Heart left ventricle (tissue), 16 donors: ENCODE measurements at regions of chr17 and their contacts with region 1.

Region 1: GRCh38 chr17:61389670-61390478 is 9.8 kb upstream of the TBX2 start:
- DNase-seq: peak in 3 of 5 donors; percentile 57 to 79 (median 63)
- ATAC-seq: peak in 3 of 4 donors; percentile 43 to 77 (median 67)
- H3K4me3 ChIP-seq: peak overlapping the region in 1 of 12 donors; percentile 26
- H3K27ac ChIP-seq: peak overlapping the region in 9 of 12 donors; percentile 20 to 66 (median 45)
- H3K4me1 ChIP-seq: peaks cover 0 to 13% (median 6%) of the 10 kb centered on the region in 12 donors
- H3K27me3 ChIP-seq: peaks cover 0 to 2% (median 0%) of the 10 kb centered on the region in 9 donors
- CTCF ChIP-seq: peak; percentile 73 to 95 (median 86)
- POLR2A ChIP-seq: no peak

Region 2: DNA sequence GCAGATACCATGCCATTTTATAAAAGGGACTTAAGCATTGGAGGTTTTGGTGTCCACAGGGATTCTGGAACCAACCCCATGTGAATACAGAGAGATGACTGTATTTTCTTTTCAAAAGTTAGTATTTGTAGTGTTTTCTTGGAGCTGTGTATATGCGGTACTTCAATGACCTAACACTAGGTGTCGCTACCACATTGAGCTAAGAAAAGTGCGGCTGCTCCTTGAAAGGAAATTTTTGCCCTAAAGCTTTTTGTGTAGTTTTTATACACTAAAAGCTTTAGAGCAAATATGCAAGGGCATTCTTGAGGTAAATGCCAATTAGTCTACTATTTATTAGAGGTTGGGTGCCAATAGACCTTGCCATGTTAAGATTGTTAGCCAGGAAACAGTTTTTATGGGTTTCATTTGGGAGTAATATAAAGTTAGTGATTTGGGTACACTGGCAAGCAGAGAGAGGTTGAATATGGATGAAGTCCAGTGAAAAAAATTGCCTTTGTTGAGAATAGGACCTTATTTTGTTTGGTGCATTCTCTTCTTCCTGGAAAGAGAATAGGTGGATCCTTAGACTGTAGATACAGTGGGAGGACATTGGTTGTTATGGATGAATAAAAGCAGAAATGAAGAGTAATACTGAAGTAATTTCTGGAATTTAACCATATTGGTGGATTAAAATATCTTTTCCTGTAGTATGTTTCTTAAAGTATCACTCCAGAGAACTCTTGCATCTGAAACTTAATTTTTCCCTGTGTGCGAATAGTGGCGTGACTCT is 668.9 kb before region 1 on chr17:
- intact Hi-C with region 1: loop called in 3 of 10 experiments (anchors 5 to 10 kb)
- DNase-seq: peak in 2 of 5 donors; percentile 18 to 27
- ATAC-seq: peak in 2 of 4 donors; percentile 41 to 62
- H3K4me3 ChIP-seq: no peak overlapping the region
- H3K27ac ChIP-seq: no peak overlapping the region
- H3K4me1 ChIP-seq: peaks cover 0 to 3% (median 0%) of the 10 kb centered on the region in 12 donors
- H3K27me3 ChIP-seq: no peaks in the 10 kb centered on the region
- CTCF ChIP-seq: peak; percentile 82 to 93 (median 88)
- POLR2A ChIP-seq: no peak

Region 3: GRCh38 chr17:60809421-60809820 is 580.5 kb before region 1 on chr17:
- intact Hi-C with region 1: no loop called
- DNase-seq: no peak
- ATAC-seq: no peak
- H3K4me3 ChIP-seq: no peak overlapping the region
- H3K27ac ChIP-seq: no peak overlapping the region
- H3K4me1 ChIP-seq: no peaks in the 10 kb centered on the region
- H3K27me3 ChIP-seq: no peaks in the 10 kb centered on the region
- CTCF ChIP-seq: no peak
- POLR2A ChIP-seq: no peak

Region 4: DNA sequence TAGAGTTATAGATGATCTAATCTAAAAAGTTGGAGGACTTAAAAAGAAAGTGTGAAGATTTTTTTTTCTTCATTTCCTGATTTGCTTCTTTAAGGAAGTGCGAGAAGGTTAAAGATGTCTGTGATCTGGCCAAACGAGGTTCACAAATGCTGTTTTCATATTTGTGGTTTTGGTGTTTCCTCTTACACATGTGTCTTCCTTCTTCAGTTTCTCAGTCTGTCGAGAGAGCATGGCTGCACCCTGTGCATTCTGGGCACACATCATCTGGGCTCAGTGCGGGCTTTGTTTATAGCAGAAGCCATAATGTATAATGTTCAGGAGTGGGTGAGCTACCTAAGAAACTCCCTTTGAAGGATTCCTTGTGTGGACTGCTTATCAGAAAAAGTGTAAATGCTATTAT is 250.7 kb before region 1 on chr17:
- intact Hi-C with region 1: loop called in 3 of 10 experiments (anchors 5 to 10 kb)
- DNase-seq: no peak
- ATAC-seq: peak in 3 of 4 donors; percentile 46 to 73 (median 72)
- H3K4me3 ChIP-seq: no peak overlapping the region
- H3K27ac ChIP-seq: peak overlapping the region in 1 of 12 donors; percentile 47
- H3K4me1 ChIP-seq: peaks cover 0 to 29% (median 4%) of the 10 kb centered on the region in 12 donors
- H3K27me3 ChIP-seq: no peaks in the 10 kb centered on the region
- CTCF ChIP-seq: no peak
- POLR2A ChIP-seq: no peak

Region 5: GRCh38 chr17:61157246-61157886 is 232.5 kb before region 1 on chr17:
- intact Hi-C with region 1: no loop called
- DNase-seq: peak in 2 of 5 donors; percentile 10 to 27
- ATAC-seq: peak in 1 of 4 donors; percentile 41
- H3K4me3 ChIP-seq: peak overlapping the region in 8 of 12 donors; percentile 4 to 39 (median 24)
- H3K27ac ChIP-seq: peak overlapping the region in 6 of 12 donors; percentile 13 to 60 (median 42)
- H3K4me1 ChIP-seq: peaks cover 0 to 9% (median 0%) of the 10 kb centered on the region in 12 donors
- H3K27me3 ChIP-seq: no peaks in the 10 kb centered on the region
- CTCF ChIP-seq: no peak
- POLR2A ChIP-seq: no peak

Region 6: DNA sequence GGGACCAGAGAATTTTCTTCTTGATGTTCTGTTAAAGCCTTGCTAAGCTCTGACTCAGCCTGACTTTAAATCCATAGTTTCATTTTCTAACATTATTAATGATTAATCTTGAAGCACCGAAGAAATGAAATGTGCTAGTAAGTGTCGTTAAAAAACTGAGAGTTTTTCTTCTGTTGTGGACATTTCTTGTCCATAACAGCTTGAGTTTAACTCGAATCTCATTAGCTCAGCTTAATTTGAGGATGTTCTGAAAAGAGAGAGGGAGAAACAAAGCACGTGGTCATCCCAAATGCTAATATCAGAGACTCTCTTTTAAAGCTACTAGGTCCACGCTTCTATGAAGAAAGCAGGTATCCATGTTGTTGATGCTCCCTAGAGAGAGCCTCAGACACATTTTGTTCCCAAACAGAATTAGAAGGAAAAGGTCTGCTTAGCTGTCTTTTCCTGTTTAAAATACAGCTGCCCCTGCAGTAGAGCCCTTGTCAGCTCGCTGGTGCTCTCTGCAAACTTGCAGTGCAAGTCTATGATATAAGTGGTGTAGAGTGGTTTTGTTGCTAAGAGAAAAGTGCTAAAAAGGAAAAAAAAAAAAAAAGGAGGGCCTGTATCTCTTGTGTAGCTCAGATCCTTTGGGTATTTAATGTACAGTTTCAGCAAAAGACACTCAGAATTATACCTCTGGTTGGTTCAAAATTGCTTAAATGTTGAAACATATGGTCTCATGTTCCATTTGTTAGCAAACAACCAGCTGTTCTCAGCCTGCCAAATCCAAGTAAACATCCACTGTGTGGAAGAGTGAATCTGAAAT is 181.4 kb before region 1 on chr17:
- intact Hi-C with region 1: loop called in 3 of 10 experiments (anchors 10 kb)
- DNase-seq: peak in 1 of 5 donors; percentile 31
- ATAC-seq: peak in 3 of 4 donors; percentile 52 to 70 (median 66)
- H3K4me3 ChIP-seq: peak overlapping the region in 6 of 12 donors; percentile 0 to 16 (median 5)
- H3K27ac ChIP-seq: peak overlapping the region; percentile 45 to 76 (median 65)
- H3K4me1 ChIP-seq: peaks cover 0 to 43% (median 11%) of the 10 kb centered on the region in 12 donors
- H3K27me3 ChIP-seq: no peaks in the 10 kb centered on the region
- CTCF ChIP-seq: no peak
- POLR2A ChIP-seq: no peak

Region 7: DNA sequence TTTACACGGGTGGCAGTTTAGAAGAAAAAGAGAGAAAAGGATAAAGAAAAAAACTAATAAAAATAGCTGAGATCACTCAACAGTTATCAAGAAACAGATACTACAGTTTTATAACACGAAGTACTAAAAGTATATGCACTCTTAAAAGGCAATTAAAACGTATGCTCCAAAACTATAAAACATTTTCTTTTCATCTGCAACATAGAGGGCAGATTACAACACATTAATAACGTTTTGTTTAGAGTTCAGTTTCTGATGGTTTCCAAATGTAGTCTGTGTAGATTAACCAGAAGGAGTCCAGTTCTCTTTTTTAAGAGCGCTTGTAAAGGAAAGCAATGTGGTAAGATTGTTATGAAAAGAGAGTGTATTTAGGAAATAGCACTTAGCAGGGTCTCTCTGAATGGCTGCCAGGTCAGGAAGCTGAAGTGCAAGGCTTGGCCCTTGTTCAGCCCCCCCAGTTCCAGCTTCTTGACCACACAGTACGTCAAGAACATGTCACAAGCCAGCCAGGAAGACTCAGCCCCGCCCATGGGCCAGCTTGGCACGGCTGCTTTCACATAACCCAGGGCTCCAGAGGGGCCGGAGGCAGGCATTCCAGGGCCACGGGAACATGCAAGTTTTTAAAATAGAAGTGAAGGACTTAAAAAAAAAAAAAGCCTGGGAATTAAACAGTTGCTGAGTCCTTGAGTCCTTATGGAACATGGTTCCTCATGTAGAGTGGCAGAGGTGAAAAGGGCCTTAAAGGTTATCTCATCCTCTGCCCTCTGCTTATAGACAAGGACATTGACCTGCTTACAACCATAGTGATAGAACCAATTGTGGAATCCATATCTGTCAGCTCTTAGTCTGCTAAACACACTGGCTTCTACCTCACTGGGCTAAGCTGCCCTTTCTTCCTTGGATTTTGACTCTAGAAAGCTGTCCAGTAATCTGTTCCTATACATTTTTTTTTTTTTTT is 137.7 kb before region 1 on chr17:
- intact Hi-C with region 1: loop called in 3 of 10 experiments (anchors 5 to 10 kb)
- DNase-seq: peak; percentile 91 to 95 (median 93)
- ATAC-seq: peak; percentile 93 to 97 (median 95)
- H3K4me3 ChIP-seq: no peak overlapping the region
- H3K27ac ChIP-seq: peak overlapping the region; percentile 52 to 85 (median 68)
- H3K4me1 ChIP-seq: peaks cover 0 to 59% (median 32%) of the 10 kb centered on the region in 12 donors
- H3K27me3 ChIP-seq: no peaks in the 10 kb centered on the region
- CTCF ChIP-seq: no peak
- POLR2A ChIP-seq: no peak

Region 8: GRCh38 chr17:61323909-61324868 is 65.7 kb before region 1 on chr17:
- intact Hi-C with region 1: no loop called
- DNase-seq: no peak
- ATAC-seq: peak in 3 of 4 donors; percentile 50 to 73 (median 50)
- H3K4me3 ChIP-seq: no peak overlapping the region
- H3K27ac ChIP-seq: peak overlapping the region in 11 of 12 donors; percentile 6 to 78 (median 60)
- H3K4me1 ChIP-seq: peaks cover 0 to 39% (median 21%) of the 10 kb centered on the region in 12 donors
- H3K27me3 ChIP-seq: no peaks in the 10 kb centered on the region
- CTCF ChIP-seq: no peak
- POLR2A ChIP-seq: no peak

Region 9: DNA sequence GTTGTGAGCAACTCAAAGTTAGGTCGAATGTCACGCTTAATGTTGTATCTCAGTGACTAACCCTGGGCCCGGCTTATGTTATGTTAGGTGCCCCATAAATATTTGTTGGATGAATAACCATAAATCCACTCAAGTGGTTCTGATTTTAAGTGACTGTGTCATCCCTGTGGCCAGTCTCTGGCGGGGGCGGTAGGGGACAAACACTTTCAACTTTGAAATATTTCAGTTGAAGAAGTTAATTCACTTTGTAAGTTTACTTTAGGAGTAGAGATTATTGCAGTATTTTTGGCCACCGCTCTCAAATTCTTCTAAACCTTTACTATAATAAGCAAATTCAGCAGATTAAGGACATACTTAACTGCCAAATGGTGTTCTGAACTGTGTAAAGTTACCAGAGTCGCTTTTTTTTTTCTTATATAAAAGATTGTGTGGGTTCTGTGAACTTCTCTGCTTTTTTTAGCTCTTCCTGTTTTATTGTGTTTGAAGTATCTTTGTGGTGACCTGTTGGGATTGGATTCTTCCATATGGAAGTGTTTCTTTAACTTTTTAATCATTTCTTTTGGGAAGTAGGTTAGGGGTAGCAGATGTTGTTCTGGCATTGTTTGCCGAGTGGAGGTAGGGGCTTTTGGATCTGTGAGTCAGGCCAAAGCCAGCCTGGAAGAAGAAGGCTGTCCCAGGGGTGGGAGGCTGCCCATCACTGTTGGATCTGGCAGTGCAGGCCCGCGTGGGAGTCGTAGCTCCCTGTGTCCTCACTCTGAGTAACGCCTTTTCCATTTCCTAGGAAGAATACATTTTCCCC is 51.7 kb before region 1 on chr17:
- intact Hi-C with region 1: loop called in 2 of 10 experiments (anchors 10 kb)
- DNase-seq: peak in 2 of 5 donors; percentile 53 to 67
- ATAC-seq: peak in 2 of 4 donors; percentile 41 to 80
- H3K4me3 ChIP-seq: no peak overlapping the region
- H3K27ac ChIP-seq: peak overlapping the region in 11 of 12 donors; percentile 4 to 60 (median 35)
- H3K4me1 ChIP-seq: peaks cover 0 to 40% (median 31%) of the 10 kb centered on the region in 12 donors
- H3K27me3 ChIP-seq: no peaks in the 10 kb centered on the region
- CTCF ChIP-seq: no peak
- POLR2A ChIP-seq: no peak